ENCODE measurements at regions of chr17 and their contacts with region 1.

Region 1: GRCh38 chr17:9522074-9522473 is 53.5 kb downstream of the STX8 start:
- DNase-seq: peak; percentile 52
- H3K4me3 ChIP-seq: no peak overlapping the region
- H3K27ac ChIP-seq: no peak overlapping the region
- H3K4me1 ChIP-seq: no peaks in the 10 kb centered on the region
- H3K27me3 ChIP-seq: no peaks in the 10 kb centered on the region
- CTCF ChIP-seq: peak; percentile 30 to 56
- POLR2A ChIP-seq: no peak

Region 2: DNA sequence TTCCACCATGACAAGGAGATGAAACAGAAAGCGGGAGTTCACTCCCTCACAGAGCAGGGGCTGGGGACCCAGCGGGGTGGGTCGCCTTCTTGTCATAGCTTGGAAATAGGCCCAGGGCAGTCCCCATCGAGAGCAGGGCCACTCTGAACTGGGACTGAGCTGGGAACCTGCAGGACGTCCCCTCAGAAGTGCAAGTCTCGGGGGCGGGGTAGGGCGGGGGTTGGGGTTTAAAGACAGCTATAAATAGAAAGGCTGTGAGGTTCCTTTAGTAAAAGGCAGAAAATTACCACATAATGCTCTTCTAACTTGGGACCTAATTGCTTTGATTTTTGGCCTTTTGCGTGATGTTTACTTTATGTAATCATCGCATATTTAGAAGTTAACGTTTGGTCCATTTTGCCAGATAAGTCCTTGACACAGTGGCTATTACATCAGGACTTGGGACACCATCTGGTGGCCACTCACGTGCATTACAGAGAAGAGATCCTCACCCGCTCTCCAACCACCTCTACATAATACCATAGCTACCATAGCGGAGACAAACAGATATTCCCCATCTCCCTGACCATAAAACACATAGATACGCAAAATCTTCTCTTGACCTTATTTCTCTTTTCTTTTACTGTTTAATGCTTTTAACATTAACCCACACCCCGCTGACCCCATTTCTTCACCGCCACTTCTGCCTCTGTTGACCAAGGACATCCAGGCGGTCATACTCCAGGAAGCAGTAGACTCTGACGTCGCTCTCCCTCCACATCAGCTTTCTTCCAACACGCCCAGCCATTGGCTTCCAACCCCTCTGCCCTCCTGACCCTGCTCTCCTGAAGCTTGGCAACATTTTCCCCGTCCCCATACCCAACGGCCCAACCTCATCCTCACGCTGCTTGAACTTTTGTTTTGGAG is 627.1 kb before region 1 on chr17:
- CTCF ChIA-PET with region 1: interaction called, 7 read pairs
- POLR2A ChIA-PET with region 1: no interaction called
- dilution Hi-C with region 1: no loop called
- intact Hi-C with region 1: loop called (anchors 10 kb)
- DNase-seq: peak; percentile 59
- H3K4me3 ChIP-seq: no peak overlapping the region
- H3K27ac ChIP-seq: no peak overlapping the region
- H3K4me1 ChIP-seq: no peaks in the 10 kb centered on the region
- H3K27me3 ChIP-seq: no peaks in the 10 kb centered on the region
- CTCF ChIP-seq: peak; percentile 65 to 71
- POLR2A ChIP-seq: no peak

Region 3: GRCh38 chr17:8991514-8992285 is 530.4 kb before region 1 on chr17:
- CTCF ChIA-PET with region 1: interaction called, 106 read pairs
- POLR2A ChIA-PET with region 1: no interaction called
- dilution Hi-C with region 1: no loop called
- intact Hi-C with region 1: loop called (anchors 1 kb)
- DNase-seq: peak; percentile 33
- H3K4me3 ChIP-seq: no peak overlapping the region
- H3K27ac ChIP-seq: no peak overlapping the region
- H3K4me1 ChIP-seq: no peaks in the 10 kb centered on the region
- H3K27me3 ChIP-seq: no peaks in the 10 kb centered on the region
- CTCF ChIP-seq: peak; percentile 65 to 71
- POLR2A ChIP-seq: no peak

Region 4: DNA sequence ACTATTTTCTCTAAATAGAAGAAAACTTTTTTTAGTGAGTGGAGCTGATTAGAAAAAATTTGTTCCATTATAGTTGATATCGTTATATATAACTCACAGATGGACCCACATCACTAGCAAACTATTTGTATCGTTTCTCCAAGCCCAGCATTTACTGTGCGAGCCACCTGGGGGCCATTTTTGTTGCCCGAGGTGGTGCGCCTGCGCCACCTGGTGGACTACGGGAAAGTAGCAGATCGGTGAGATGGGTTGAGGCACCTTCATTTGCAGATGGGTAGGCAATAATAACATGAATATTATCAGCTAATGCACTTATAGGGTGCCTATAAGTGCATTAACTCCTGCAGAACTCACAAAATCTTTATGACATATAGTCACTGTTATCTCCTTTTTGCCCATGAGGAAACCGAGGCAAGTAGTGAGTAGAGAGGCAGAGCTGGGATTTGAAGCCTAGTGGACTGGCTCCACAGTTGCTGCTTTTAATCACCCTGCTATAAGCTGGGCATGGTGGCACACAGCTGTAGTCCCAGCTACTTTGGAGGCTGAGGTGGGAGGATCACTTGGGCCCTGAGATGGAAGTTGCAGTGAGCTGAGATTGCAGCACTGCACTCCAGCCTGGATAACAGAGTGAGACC is 524.0 kb before region 1 on chr17:
- CTCF ChIA-PET with region 1: interaction called, 106 read pairs
- POLR2A ChIA-PET with region 1: no interaction called
- dilution Hi-C with region 1: no loop called
- intact Hi-C with region 1: loop called (anchors 1 kb)
- DNase-seq: peak; percentile 52
- H3K4me3 ChIP-seq: no peak overlapping the region
- H3K27ac ChIP-seq: no peak overlapping the region
- H3K4me1 ChIP-seq: no peaks in the 10 kb centered on the region
- H3K27me3 ChIP-seq: peaks cover 10 to 11% of the 10 kb centered on the region in 2 experiments
- CTCF ChIP-seq: peak; percentile 88 to 92
- POLR2A ChIP-seq: no peak

Region 5: GRCh38 chr17:9291912-9292560 is 230.0 kb before region 1 on chr17:
- CTCF ChIA-PET with region 1: interaction called, 12 read pairs
- POLR2A ChIA-PET with region 1: no interaction called
- dilution Hi-C with region 1: no loop called
- intact Hi-C with region 1: loop called (anchors 1 kb)
- DNase-seq: peak; percentile 41
- H3K4me3 ChIP-seq: no peak overlapping the region
- H3K27ac ChIP-seq: no peak overlapping the region
- H3K4me1 ChIP-seq: no peaks in the 10 kb centered on the region
- H3K27me3 ChIP-seq: no peaks in the 10 kb centered on the region
- CTCF ChIP-seq: peak; percentile 56 to 69
- POLR2A ChIP-seq: no peak

Region 6: DNA sequence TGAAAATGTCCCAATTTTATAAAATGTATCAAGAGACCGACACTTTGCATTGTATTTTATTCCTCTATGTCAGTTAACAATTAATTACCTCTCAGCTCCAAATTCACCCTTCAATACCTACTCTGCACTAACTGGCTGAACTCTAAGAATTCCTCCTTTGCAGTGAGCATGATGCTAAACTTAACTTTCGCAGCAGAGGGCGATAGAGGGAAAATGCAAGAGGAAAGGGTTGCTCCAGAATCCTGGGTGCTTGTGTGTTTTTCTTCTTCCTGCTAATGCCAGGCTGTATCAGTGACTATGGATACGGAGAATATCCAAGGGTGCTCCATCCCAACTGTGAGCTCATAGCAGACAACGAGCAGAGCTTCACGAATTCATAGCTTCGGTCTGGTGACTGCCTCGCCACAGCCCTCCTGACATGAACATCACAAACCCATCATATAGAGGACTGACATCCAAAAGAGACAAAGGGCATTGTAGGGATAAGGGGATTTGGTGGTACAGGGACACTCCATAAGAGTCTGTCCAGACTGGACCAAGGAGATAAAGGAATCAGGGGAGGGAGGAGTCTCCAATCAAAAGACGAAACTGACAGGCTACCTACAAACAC is 119.4 kb before region 1 on chr17:
- CTCF ChIA-PET with region 1: interaction called, 60 read pairs
- POLR2A ChIA-PET with region 1: no interaction called
- dilution Hi-C with region 1: no loop called
- intact Hi-C with region 1: loop called (anchors 1 kb)
- DNase-seq: peak; percentile 36
- H3K4me3 ChIP-seq: no peak overlapping the region
- H3K27ac ChIP-seq: no peak overlapping the region
- H3K4me1 ChIP-seq: no peaks in the 10 kb centered on the region
- H3K27me3 ChIP-seq: no peaks in the 10 kb centered on the region
- CTCF ChIP-seq: peak; percentile 43 to 61
- POLR2A ChIP-seq: no peak

Region 7: GRCh38 chr17:9557161-9557755 is 35.2 kb after region 1 on chr17:
- CTCF ChIA-PET with region 1: interaction called, 10 read pairs
- POLR2A ChIA-PET with region 1: interaction called, 3 read pairs
- dilution Hi-C with region 1: no loop called
- intact Hi-C with region 1: no loop called
- DNase-seq: no peak
- H3K4me3 ChIP-seq: no peak overlapping the region
- H3K27ac ChIP-seq: no peak overlapping the region
- H3K4me1 ChIP-seq: no peaks in the 10 kb centered on the region
- H3K27me3 ChIP-seq: no peaks in the 10 kb centered on the region
- CTCF ChIP-seq: no peak
- POLR2A ChIP-seq: no peak